Mammary epithelial cell (primary cell): ENCODE measurements at regions of chr13 and their contacts with region 1.

Region 1: DNA sequence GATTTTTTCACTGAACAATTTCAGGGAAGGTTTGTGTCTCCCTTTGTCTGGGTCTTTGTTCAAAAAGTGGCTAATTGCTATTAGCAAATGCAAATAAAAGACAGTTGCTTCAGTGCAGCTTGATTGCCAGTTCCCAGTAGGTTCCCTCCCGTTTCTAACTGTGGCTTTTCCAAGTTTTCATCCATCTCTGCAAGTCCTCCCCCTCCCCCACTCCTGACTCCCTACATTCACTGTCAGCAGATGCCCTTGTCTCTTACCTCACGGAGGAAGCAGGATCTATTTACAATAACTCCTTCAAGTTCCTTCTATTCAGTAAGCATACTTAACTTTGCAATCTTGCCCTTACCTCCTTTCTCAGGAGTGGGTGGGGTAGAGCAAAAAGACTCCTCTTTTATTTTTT is 55.4 kb upstream of the SCEL start:
- DNase-seq: no peak
- H3K4me3 ChIP-seq: no peak overlapping the region
- H3K27ac ChIP-seq: no peak overlapping the region
- H3K4me1 ChIP-seq: peaks cover 5% of the 10 kb centered on the region
- H3K27me3 ChIP-seq: no peaks in the 10 kb centered on the region
- CTCF ChIP-seq: no peak

Region 2: DNA sequence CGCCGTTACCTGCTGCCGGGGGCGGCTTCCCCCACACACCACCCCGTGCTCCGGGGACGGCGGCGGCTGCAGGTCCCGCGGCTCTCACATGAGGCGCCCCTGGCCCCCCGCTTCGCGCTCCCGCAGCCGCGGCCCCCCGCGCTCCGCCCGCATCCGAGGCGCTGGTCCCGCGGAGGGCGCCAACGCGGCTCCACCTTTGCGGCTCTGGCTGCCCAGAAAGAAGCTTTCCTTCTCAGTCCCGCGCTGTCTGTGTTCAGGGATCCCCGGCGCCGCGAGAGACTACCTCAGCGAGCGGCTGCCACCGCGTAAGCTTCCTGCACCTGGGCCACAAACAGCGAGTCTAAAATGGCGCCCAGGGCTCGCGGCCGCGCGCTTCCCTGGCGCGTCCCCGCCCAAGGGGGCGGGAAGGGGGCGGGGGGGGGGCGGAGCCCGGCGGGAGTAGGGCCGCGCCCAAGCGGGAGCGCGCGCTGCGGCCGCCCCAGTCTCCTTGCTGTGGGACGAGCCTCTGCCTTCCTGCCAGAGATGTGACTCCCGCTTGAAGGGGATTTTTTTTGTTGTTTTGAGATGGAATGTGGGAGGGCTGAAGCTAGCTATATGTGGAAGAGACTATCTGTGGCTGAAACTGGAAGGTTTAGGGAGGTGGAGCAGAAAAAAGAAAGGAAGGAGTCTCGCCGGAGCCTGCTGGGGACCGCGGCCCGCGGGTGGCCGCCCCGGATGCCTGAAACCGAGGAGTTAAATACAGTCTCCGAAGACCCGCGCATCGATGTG is 453.1 kb before region 1 on chr13 and contains the start of gene FBXL3:
- CTCF ChIA-PET with region 1: interaction called, 3 read pairs
- dilution Hi-C with region 1: no loop called
- in situ Hi-C with region 1: no loop called
- intact Hi-C with region 1: loop called (anchors 1 kb)
- DNase-seq: peak; percentile 91
- H3K4me3 ChIP-seq: peak within 1 kb of the TSS; percentile 83 to 95 (median 89)
- H3K27ac ChIP-seq: peak within 1 kb of the TSS; percentile 85
- H3K4me1 ChIP-seq: peaks cover 22% of the 10 kb centered on the region
- H3K27me3 ChIP-seq: no peaks in the 10 kb centered on the region
- CTCF ChIP-seq: no peak
- total RNA-seq, gene FBXL3: 31.9 to 44.8 TPM

Region 3: DNA sequence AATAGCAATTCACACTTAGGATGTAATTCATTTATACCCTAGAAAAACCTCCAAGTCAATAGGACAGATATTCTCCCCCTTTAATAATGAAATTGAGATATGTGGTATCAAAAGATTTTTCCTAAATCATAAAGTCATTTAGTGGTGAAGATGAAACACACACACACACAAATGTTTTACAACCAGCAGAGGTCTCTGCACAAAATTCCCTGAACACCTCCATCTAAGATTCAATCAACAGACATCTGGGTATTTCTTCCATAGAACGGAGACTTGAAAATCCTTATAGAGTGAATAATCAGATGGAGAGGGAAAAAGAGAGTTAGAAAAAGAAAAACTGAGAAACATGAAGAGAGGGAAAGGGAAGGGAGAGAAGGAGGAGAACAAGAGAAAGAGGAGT is 205.9 kb before region 1 on chr13:
- CTCF ChIA-PET with region 1: no interaction called
- dilution Hi-C with region 1: no loop called
- in situ Hi-C with region 1: no loop called
- intact Hi-C with region 1: loop called (anchors 5 kb)
- DNase-seq: no peak
- H3K4me3 ChIP-seq: no peak overlapping the region
- H3K27ac ChIP-seq: no peak overlapping the region
- H3K4me1 ChIP-seq: no peaks in the 10 kb centered on the region
- H3K27me3 ChIP-seq: no peaks in the 10 kb centered on the region
- CTCF ChIP-seq: no peak